ENCODE measurements at regions of chr3 and their contacts with region 1.

Region 1: DNA sequence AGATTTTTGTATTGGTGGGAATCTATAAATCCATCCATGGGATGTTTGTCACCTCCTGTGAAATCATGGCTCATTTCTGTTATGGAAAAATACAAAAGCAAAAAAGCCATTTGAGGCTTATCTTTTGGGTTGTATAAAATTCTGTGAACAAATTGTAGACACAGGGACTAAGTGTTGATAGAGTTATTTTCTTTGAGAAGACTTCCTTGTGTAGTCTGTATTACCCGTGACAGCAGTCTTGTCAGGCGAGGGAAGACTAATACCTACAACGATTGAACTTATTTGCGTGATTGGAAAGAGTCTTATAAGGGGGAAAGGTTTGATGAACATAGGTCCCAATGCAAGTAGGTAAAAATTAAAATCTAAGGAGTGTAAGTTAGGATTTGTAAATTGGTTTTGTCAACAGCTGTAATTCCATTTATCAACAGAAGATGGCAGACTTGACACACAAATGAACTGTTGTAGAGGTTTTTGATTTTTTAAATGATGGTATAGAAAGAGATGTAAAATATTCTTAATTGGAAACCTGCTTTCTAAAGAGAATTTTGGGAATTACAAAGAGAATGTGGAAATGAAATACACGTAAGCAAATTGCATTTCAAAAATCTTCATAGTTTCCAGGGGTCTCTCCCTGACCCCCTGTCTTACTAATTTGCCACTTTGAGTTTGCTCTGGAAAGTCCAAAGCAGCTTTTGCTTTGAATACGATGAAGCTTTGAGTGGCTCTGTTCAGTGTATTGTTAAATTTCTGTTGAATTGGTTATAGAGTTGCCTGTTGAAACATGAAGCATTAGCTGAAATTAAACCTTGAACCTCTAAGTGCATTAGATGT is 33.2 kb downstream of the SLC25A26 start:
- DNase-seq: peak; percentile 67
- ATAC-seq: peak; percentile 70
- H3K4me3 ChIP-seq: no peak overlapping the region
- H3K27ac ChIP-seq: no peak overlapping the region
- H3K4me1 ChIP-seq: peaks cover 12% of the 10 kb centered on the region
- H3K27me3 ChIP-seq: no peaks in the 10 kb centered on the region
- CTCF ChIP-seq: peak; percentile 75
- POLR2A ChIP-seq: no peak
- RAD21 ChIP-seq: peak; percentile 77

Region 2: DNA sequence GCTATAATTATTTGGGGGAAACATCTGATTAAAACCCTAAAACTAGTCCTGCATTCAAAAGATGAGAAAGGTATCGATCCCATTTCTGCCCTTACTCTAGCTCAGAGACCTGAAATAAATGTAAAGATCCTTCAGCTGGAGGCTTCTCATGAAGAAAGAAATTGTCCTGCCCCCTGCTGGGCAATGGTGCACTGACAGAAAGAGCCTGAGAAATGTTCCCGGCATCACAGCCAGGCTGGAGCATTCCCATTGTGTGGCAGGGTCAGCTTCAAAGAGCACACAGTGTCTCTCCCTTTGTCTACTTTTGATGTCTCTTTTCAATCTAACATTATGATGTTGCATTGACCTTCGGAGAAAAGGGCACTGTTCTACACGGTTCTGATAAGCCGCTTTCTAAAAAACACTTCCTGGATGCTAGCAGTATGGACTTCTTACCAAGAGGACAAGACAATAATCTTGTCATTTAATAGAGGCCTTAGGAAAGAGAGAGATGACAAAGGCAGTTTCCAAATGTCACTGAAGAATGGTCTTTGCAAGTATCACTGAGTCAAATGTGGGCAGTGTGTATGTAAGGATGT is 502.8 kb before region 1 on chr3:
- CTCF ChIA-PET with region 1: no interaction called
- POLR2A ChIA-PET with region 1: no interaction called
- dilution Hi-C with region 1: no loop called
- in situ Hi-C with region 1: no loop called
- intact Hi-C with region 1: no loop called
- DNase-seq: peak; percentile 34
- ATAC-seq: peak; percentile 89
- H3K4me3 ChIP-seq: no peak overlapping the region
- H3K27ac ChIP-seq: no peak overlapping the region
- H3K4me1 ChIP-seq: no peaks in the 10 kb centered on the region; the same call in 1 of the 2 replicates
- H3K27me3 ChIP-seq: no peaks in the 10 kb centered on the region
- CTCF ChIP-seq: peak; percentile 59
- POLR2A ChIP-seq: no peak
- RAD21 ChIP-seq: peak; percentile 54

Region 3: GRCh38 chr3:66138336-66139313 is 115.4 kb before region 1 on chr3:
- CTCF ChIA-PET with region 1: no interaction called
- POLR2A ChIA-PET with region 1: no interaction called
- dilution Hi-C with region 1: no loop called
- in situ Hi-C with region 1: no loop called
- intact Hi-C with region 1: no loop called
- DNase-seq: peak; percentile 68
- ATAC-seq: peak; percentile 89
- H3K4me3 ChIP-seq: no peak overlapping the region
- H3K27ac ChIP-seq: no peak overlapping the region
- H3K4me1 ChIP-seq: peaks cover under 1% of the 10 kb centered on the region
- H3K27me3 ChIP-seq: no peaks in the 10 kb centered on the region
- CTCF ChIP-seq: peak; percentile 83
- POLR2A ChIP-seq: 0 out of 2 replicates have a peak, but pooled peaks have one; percentile 23
- RAD21 ChIP-seq: peak; percentile 91

Region 4: DNA sequence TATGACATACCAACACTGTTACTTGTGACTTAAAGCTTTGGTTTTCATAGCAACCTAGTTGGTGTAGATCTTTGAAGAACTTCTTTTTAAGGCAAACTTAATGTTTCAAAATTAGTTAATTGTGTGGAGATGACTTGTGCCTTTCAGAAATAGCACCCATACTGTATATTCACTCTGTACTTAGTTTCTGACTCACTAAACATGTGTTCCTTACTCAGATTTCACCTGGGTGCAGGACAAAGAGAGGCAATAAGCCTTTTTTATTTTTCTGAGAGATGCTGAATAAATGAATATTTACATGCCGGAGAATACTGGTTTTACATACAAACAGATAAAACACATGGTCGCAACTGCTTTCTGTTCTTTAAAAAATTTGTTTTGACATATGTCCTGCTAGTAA is 11.6 kb after region 1 on chr3:
- CTCF ChIA-PET with region 1: no interaction called
- POLR2A ChIA-PET with region 1: no interaction called
- dilution Hi-C with region 1: no loop called
- in situ Hi-C with region 1: no loop called
- intact Hi-C with region 1: no loop called
- DNase-seq: no peak
- ATAC-seq: no peak
- H3K4me3 ChIP-seq: no peak overlapping the region
- H3K27ac ChIP-seq: no peak overlapping the region
- H3K4me1 ChIP-seq: peaks cover 16% of the 10 kb centered on the region
- H3K27me3 ChIP-seq: no peaks in the 10 kb centered on the region
- CTCF ChIP-seq: no peak
- POLR2A ChIP-seq: no peak
- RAD21 ChIP-seq: no peak

Region 5: GRCh38 chr3:66836363-66837152 is 582.6 kb after region 1 on chr3:
- CTCF ChIA-PET with region 1: no interaction called
- POLR2A ChIA-PET with region 1: no interaction called
- dilution Hi-C with region 1: no loop called
- in situ Hi-C with region 1: no loop called
- intact Hi-C with region 1: loop called (anchors 1 kb)
- DNase-seq: peak; percentile 31
- ATAC-seq: peak; percentile 78
- H3K4me3 ChIP-seq: no peak overlapping the region
- H3K27ac ChIP-seq: no peak overlapping the region
- H3K4me1 ChIP-seq: no peaks in the 10 kb centered on the region
- H3K27me3 ChIP-seq: peaks cover 3% of the 10 kb centered on the region; the same call in 1 of the 2 replicates
- CTCF ChIP-seq: peak; percentile 50
- POLR2A ChIP-seq: no peak
- RAD21 ChIP-seq: peak; percentile 58

Measured in IMR-90 (cell line).